Activated naive CD4-positive, alpha-beta T cell treated with anti-CD3 and anti-CD28 coated beads for 36 hours (primary cell): ENCODE measurements at regions of chr15 and their contacts with region 1.

Region 1: DNA sequence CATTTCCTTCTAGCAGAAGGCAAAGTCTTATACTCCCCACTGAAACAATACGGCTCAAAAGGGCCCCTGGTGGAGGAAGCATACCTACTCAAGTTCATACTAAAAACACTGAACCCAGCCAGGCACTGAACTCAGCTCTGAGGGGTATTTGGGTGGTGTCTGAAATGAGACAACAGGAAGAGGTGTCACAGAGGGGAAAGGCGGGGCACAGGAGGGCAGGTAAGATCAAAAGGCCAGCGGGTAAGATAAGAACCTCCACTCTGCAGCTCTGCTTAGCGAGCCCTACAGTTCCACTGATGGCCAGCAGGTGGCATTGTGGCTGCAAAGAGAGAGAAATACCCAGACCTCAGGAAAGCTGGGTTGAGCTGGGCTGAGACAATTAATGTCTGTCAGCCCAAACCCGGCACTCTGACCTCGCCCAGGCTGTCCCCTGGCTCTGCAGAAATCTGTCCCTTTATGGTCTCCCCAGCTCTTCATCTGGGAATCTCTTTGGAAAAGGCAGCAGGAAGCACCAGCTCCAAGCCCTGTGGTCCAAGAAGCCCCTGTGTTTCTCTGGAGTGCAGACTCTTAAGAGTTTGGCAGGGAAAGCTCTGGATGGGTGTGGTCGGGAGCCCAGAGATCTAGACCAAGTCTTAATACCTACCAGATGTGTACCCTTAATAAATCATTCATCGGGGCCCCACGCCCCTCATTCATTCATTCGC is 8.4 kb downstream of the MFGE8 start:
- DNase-seq: peak; percentile 96
- H3K4me3 Mint-ChIP-seq: no peak overlapping the region
- H3K27ac Mint-ChIP-seq: peak overlapping the region; percentile 80
- H3K4me1 Mint-ChIP-seq: peaks cover 40% of the 10 kb centered on the region
- H3K27me3 Mint-ChIP-seq: no peaks in the 10 kb centered on the region

Region 2: DNA sequence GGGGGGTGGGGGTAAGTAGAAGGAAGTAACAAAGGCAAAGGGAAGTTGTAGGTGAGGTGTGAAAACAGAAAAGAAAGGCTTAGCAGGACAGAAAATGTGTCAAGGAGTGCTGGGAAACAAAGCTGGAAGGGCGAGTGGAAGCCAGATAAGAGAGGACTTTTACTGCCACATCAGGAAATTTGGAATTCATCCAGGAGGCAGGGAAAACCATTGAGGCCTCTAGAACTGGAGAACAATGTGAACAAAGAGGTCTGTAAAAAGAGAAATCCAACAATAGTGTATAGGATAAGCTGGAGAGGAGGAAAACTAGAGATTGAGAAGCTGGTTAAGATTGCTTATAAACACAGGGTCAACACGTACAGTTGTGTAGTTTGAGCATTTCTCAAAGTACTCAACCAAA is 764.8 kb before region 1 on chr15:
- CTCF ChIA-PET with region 1: no interaction called
- intact Hi-C with region 1: no loop called
- DNase-seq: no peak
- H3K4me3 Mint-ChIP-seq: no peak overlapping the region
- H3K27ac Mint-ChIP-seq: no peak overlapping the region
- H3K4me1 Mint-ChIP-seq: no peaks in the 10 kb centered on the region
- H3K27me3 Mint-ChIP-seq: no peaks in the 10 kb centered on the region

Region 3: DNA sequence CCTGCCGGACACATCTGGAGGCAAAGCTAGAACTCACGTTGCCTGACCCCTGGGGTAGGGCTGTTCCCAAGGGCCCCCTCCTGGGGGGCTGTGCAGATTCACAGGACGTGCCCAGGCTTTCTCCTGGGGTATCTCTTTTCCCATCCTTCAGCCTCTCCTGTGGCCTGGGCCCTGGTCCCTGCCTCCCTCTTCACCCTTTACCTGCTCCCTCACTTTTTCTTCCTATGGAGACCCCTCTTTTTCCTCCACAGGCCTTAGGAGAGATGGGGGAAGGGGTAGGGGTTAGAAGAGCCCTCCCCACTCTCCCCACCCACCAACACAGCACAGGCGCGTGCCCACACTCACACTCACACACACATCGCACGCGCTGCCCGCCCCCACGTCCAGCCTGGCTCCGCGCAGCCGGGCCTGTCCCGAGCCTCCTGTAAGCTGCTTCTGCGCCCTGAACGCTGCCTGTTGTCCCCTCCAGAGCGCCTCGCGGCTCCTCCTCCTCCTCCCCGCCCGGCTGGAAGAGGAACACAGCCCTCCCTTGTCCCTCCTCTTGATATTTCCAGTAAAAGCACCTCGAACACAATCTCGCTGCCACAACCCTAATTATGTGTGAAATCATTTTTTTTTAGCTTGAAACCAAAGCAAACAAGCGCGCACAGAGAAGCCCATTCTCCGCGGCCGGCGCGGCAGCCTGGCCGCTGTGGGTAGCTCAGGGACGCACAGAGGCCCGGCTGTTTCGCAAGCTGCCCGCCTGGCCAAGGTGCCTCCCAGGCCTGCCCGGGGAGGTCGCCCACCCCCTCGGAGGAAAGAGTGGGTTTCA is 135.4 kb before region 1 on chr15:
- CTCF ChIA-PET with region 1: no interaction called
- intact Hi-C with region 1: no loop called
- DNase-seq: no peak
- H3K4me3 Mint-ChIP-seq: peak overlapping the region; percentile 36
- H3K27ac Mint-ChIP-seq: no peak overlapping the region
- H3K4me1 Mint-ChIP-seq: peaks cover 1% of the 10 kb centered on the region
- H3K27me3 Mint-ChIP-seq: peaks cover 29% of the 10 kb centered on the region

Region 4: DNA sequence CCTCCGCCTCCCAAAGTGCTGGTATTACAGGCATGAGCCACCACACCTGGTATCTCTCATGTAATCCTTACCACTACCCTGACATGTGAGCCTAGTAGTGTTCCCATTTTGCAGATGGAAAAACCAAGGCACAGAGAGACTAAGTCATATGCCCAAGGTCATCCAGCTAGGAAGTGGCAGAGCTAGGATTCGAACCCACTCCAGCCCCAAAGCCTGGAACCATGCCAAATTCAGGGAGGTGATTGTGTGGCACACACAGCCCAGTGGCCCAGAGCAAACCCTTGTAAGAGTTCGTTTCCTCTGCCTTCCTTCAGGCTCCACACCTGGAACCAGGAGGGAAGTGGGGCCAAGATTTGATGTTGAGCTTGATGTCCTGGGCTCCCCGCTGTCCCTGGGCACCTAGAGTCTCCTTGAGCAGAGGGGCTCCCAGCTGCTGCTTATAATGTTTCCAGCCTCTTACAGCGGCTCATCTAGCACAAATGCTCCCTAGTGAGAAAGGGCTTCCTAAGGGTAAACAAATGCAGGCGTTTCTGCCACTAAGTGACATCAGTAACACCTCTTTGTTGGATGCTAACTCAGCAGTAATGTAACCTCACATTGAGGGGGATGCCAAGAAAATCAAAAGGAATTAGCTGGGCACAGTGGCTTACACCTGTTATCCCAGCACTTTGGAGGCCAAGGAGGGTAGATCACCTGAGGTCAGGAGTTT is 13.1 kb before region 1 on chr15:
- CTCF ChIA-PET with region 1: interaction called, 24 read pairs
- intact Hi-C with region 1: loop called (anchors 1 kb)
- DNase-seq: no peak
- H3K4me3 Mint-ChIP-seq: no peak overlapping the region
- H3K27ac Mint-ChIP-seq: no peak overlapping the region
- H3K4me1 Mint-ChIP-seq: peaks cover 29% of the 10 kb centered on the region
- H3K27me3 Mint-ChIP-seq: no peaks in the 10 kb centered on the region

Region 5: DNA sequence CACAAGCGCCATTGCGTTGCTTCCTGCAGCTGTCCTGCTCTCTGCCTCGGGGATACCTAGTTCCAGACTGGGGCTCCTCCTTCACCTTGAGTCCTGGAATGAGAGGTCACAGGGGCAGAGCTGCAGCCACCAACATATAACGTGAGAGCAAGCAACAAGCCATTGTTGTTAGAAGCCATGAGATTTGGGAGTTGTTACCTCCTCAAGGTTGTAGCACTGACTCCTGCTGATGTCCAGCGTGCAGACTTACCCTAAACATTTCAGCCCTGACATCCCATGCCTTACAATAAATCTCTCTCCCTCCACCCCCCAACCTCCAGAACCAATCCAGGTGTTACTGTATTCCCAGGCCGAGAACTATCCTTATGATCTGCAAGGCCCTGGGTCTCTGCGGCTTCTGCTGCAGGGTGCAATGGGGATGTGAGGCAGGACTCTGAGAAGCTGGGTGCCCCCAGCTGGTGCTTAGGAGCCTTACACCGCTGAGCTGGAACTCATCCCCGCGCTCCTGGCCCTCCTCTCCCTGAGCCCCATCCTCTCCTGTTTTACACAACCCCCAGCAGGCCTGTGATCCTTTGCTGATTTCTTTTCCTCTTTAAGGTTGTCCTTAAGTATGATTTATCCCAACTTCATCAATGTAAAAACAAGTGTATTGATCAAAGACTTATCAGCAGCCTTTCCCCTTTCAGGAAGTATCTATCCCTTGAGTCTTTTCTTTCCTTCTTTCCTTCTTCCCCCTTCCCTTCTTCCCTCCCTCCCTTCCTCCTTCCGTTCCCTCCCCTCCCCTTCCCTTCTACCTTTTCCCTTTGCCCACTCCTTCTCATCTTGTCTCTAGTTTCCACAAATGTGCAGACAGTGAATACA is 99.3 kb after region 1 on chr15:
- CTCF ChIA-PET with region 1: interaction called, 22 read pairs
- intact Hi-C with region 1: no loop called
- DNase-seq: peak; percentile 10
- H3K4me3 Mint-ChIP-seq: no peak overlapping the region
- H3K27ac Mint-ChIP-seq: no peak overlapping the region
- H3K4me1 Mint-ChIP-seq: no peaks in the 10 kb centered on the region
- H3K27me3 Mint-ChIP-seq: no peaks in the 10 kb centered on the region

Region 6: GRCh38 chr15:89017370-89018066 is 112.7 kb after region 1 on chr15:
- CTCF ChIA-PET with region 1: interaction called, 28 read pairs
- intact Hi-C with region 1: loop called (anchors 1 kb)
- DNase-seq: peak; percentile 93
- H3K4me3 Mint-ChIP-seq: peak overlapping the region; percentile 43
- H3K27ac Mint-ChIP-seq: no peak overlapping the region
- H3K4me1 Mint-ChIP-seq: peaks cover 12% of the 10 kb centered on the region
- H3K27me3 Mint-ChIP-seq: peaks cover 3% of the 10 kb centered on the region

Region 7: GRCh38 chr15:89177633-89178306 is 273.0 kb after region 1 on chr15:
- CTCF ChIA-PET with region 1: interaction called, 17 read pairs
- intact Hi-C with region 1: loop called (anchors 1 kb)
- DNase-seq: peak; percentile 86
- H3K4me3 Mint-ChIP-seq: no peak overlapping the region
- H3K27ac Mint-ChIP-seq: peak overlapping the region; percentile 94
- H3K4me1 Mint-ChIP-seq: peaks cover 46% of the 10 kb centered on the region
- H3K27me3 Mint-ChIP-seq: no peaks in the 10 kb centered on the region

Region 8: GRCh38 chr15:89642106-89642505 is 737.3 kb after region 1 on chr15:
- CTCF ChIA-PET with region 1: no interaction called
- intact Hi-C with region 1: no loop called
- DNase-seq: no peak
- H3K4me3 Mint-ChIP-seq: no peak overlapping the region
- H3K27ac Mint-ChIP-seq: no peak overlapping the region
- H3K4me1 Mint-ChIP-seq: no peaks in the 10 kb centered on the region
- H3K27me3 Mint-ChIP-seq: no peaks in the 10 kb centered on the region